Activated naive CD4-positive, alpha-beta T cell treated with anti-CD3 and anti-CD28 coated beads for 36 hours (primary cell): ENCODE measurements at regions of chr16 and their contacts with region 1.

Region 1: DNA sequence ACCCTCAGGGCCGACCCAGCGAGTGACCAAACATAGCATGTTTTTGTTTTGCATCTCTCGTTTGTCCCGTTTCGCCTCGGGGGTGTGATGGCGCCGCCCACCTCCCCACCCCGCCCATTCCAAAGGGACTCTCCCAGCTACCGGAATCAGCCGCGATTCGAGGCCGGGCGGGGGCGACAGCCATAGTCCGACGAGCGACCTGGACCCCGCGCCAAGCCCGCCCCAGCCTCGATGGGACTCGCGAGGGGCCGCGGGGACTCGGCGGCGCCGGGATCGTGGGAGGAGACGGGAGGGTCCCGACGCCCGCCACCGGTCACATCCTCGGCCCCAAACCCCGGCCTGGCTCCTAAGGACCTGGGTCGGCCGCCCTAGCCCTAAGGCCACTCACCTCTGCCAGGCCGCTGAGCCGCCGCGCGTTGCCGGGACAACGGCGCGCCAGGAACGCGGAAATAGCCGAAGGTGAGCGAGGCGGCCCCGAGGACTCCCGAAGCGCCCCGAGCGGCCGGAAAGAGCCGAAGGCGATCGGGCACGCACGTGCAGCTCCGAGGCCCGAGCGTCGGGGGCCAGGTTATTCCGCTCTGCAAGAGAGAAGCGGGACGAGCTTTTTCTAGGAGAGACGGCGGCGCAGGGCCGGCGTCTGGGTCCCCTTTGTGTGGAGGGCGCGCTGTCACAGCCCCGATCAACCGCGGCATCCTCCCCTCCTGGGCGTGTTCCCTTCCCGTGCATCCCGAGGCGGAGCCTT is 1.4 kb downstream of the IFT140 start:
- DNase-seq: peak; percentile 90
- H3K4me3 Mint-ChIP-seq: peak overlapping the region; percentile 96
- H3K27ac Mint-ChIP-seq: no peak overlapping the region
- H3K4me1 Mint-ChIP-seq: peaks cover 28% of the 10 kb centered on the region
- H3K27me3 Mint-ChIP-seq: no peaks in the 10 kb centered on the region

Region 2: DNA sequence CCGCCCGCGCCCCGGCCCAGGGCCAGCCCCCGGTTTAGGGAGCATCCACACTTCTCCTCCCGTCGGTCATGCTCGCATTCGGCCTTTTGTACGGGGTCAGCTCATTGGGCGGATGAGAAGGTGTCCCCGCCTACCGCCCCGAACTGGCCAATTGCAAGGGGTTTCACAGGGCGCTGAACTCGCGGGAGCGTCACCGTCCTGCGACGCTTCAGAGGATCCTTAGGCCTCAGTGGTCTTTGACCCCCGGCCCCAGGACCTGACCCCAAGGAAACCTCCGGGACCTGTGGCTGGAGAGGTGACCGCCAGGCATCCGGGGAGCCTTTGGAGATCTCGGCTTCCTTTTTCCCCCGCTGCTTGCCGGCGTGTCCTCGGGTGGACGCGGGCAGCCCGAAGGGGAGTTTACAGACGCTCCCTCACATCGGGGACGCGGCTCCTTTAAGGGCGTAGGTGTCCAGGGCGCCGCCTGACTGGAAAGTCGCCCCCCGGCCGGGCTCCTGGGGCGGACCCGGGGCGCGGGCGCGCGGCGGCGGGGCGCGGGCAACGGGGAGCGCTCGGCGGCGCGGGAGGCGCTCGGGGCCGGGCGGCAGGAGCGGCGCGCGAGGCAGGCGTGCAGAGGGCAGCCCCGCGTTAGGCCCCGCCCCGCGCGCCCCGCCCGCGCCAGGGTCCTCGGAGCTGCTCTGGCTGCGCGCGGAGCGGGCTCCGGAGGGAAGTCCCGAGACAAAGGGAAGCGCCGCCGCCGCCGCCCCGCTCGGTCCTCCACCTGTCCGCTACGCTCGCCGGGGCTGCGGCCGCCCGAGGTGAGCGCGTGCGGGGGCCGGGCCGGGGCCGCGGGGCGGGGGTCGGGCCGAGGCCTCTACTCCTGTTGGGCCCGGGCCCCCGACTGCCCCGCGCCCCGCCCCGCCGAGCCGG is 301.2 kb before region 1 on chr16 and contains the start of gene UBE2I:
- CTCF ChIA-PET with region 1: no interaction called
- intact Hi-C with region 1: loop called (anchors 1 kb)
- DNase-seq: peak; percentile 98
- H3K4me3 Mint-ChIP-seq: peak within 1 kb of the TSS; percentile 94
- H3K27ac Mint-ChIP-seq: peak within 1 kb of the TSS; percentile 99
- H3K4me1 Mint-ChIP-seq: peaks cover 41% of the 10 kb centered on the region
- H3K27me3 Mint-ChIP-seq: no peaks in the 10 kb centered on the region
- total RNA-seq, gene UBE2I: 273 to 297 TPM

Region 3: DNA sequence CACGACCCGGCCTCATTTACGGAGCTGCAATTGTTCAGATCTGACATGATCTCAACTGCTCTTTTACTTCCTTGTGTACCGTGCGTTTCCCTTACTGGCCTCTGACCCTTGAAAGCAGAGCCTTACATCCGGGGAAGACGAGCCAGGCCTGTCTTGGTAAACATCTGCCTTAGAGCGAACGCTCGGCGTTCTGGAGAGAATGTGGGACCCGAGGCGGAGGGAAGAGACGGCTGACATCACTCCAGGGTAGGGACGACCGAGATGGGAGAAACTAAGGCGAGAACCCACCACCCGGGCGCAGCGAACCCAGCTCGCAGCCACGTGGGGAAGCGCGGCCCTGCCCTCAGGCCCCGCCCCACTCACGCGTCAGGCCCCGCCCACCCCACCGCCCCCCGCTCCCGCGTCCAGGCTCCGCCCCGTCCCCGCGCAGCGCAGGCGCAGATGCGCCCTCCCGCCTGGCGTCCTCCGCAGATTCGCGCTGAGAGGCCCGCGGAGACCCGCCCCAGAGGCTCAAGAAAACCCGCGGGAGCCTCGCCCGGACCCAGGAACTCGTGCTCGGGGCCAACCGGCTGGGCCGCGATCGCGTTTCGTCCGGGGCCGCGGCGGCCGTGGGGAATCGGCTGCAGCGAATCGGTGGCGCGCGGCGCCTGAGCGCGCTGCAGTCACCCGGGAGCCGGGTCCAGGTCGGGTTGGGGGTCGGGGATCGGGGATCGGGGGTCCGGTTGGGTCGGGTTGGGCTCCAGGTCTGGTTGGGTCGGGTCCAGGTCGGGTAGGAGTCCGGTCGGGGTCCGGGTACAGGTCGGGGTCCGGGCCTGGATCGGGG is 117.3 kb before region 1 on chr16 and contains the start of gene TELO2:
- CTCF ChIA-PET with region 1: no interaction called
- intact Hi-C with region 1: loop called (anchors 10 kb)
- DNase-seq: peak; percentile 85
- H3K4me3 Mint-ChIP-seq: peak within 1 kb of the TSS; percentile 90
- H3K27ac Mint-ChIP-seq: peak within 1 kb of the TSS; percentile 94
- H3K4me1 Mint-ChIP-seq: peaks cover 16% of the 10 kb centered on the region
- H3K27me3 Mint-ChIP-seq: no peaks in the 10 kb centered on the region
- total RNA-seq, gene TELO2: 68.1 to 76.1 TPM

Region 4: DNA sequence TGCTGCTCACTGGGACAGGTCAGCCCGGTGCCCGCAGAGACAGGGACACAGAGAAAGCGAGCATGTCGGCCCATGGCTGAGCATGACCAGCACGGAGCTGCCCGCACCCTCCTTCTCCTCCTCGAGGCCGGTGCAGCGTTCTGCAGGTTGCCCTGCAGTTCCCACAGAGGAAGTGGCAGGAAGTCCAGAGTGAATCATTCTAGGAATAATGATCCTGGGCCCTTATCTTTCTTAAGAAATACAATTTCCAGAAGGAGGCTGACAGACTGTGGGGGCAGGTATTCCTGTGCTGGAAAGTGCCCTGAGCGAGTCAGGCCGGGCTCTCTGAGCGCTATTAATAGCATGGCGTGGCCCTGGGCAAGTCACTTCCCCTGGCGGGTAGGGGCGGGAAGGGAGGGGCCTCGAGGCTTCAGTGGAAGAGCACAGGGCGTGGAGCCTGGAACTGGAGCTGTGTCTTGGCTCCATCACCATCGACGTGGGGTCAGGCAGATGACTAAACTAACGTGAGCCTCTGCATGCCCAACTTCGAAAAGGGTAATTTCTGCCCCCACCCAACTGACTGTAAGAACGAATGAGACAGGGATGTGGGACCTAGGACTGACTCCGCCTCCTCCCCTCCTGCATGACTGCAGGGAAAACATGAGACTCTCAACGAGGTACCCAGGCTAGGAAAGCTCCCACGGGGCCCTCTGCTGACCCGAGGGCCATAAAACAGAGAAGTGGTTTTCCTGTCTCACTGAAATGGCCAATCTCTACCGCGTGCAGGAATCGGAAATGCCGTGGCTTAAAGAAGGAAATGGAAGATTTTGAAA is 67.2 kb before region 1 on chr16:
- CTCF ChIA-PET with region 1: no interaction called
- intact Hi-C with region 1: loop called (anchors 2 kb)
- DNase-seq: peak; percentile 84
- H3K4me3 Mint-ChIP-seq: peak overlapping the region; percentile 60
- H3K27ac Mint-ChIP-seq: peak overlapping the region; percentile 89
- H3K4me1 Mint-ChIP-seq: peaks cover 79% of the 10 kb centered on the region
- H3K27me3 Mint-ChIP-seq: no peaks in the 10 kb centered on the region

Region 5: DNA sequence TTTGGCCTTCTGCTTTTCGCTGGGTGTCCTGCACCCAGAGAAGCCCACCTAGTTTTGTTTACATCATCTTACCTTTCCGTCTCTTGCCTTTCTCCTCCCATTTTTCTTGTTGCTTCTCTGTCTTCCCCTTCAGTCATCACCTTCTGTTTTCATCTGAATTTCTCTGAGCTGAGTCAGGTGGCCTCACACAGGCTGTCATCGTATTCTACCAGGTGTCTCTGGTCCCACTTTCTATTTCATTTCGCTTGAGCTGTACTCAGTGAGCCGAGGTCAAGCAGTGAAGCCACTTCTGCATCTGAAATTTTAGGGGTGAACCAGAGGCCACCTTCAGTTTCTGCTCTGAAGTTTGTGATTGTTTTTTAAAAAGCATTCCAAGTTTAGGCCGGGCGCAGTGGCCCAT is 11.4 kb after region 1 on chr16:
- CTCF ChIA-PET with region 1: no interaction called
- intact Hi-C with region 1: no loop called
- DNase-seq: no peak
- H3K4me3 Mint-ChIP-seq: no peak overlapping the region
- H3K27ac Mint-ChIP-seq: no peak overlapping the region
- H3K4me1 Mint-ChIP-seq: peaks cover 29% of the 10 kb centered on the region
- H3K27me3 Mint-ChIP-seq: no peaks in the 10 kb centered on the region

Region 6: DNA sequence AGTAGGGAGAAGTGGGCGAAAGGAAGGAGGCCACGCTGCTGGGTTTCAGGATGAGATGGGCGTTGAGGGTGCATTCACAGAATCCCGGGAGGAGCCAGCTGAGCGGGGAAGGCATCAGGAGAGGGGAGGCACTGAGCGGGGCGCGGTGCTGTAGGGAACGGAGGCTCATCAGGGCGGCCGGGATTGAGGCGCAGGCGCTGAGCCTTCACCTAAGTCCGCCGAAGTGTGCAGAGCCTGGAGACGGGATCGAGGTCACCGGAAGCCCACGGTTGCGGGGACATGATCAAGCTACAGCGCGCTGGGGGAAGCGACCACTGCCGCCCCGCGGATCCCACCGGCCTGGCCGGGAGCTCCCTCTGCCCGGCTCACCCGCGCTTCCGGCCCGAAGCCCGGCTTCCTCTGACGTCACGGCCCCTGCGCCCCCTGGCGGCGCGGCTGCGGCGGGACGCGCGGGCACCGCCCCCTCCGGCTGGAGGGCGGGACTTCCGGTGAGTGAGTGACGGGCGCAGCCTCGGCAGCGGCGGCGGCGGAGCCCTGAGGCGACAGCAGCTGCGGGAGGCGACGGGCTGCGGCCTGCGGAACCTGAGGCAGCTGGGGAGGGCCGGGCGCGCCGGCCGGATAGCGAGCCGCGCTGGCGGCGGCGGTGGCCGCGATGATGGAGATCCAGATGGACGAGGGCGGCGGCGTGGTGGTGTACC is 95.4 kb after region 1 on chr16 and contains the start of gene MAPK8IP3:
- CTCF ChIA-PET with region 1: no interaction called
- intact Hi-C with region 1: loop called (anchors 1 kb)
- DNase-seq: peak; percentile 91
- H3K4me3 Mint-ChIP-seq: peak within 1 kb of the TSS; percentile 98
- H3K27ac Mint-ChIP-seq: peak within 1 kb of the TSS; percentile 92
- H3K4me1 Mint-ChIP-seq: peaks cover 32% of the 10 kb centered on the region
- H3K27me3 Mint-ChIP-seq: no peaks in the 10 kb centered on the region
- total RNA-seq, gene MAPK8IP3: 46.5 to 50.7 TPM

Region 7: DNA sequence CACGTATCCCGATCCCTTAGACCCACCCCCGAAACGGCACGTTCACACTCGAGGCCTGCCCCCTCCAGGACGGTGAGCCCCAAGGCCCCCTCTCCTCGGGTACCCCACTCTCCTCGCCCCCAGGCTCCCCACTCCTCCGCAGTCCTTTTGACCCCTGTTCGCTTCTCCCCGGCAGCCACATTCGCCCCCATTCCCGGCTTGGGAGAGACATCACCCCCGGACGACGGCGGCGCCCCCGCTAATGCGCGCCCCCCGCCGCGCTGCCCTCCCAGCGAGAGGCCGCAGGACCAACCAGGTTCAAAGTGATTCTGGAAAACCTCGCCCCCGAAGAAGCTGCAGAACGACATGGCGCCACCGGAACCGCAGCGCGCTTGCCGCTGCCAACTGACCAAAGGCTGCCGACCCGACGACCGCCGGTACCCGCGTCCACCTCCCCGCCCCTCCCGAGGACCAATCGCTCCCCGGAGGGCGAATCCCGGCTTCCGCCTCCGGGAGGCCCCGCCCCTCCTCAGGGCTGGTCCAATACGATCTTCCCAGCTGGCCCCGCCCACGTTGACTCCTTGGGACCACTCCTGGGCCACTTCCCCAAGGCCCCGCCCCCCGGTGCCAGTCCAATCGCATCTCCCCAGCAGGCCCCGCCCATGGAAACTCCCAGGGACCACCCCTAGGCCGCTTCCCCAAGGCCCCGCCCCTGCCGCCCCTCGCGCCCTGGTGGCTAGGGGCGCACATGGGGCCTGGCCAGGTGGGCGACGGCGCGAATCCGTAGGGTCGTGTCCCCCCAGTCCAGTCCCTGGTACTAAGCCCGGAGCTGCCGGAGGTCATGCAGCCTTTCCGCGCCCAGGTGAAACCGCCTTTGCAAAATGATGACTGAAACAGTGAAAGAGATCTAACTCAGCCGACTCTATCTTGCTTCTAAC is 332.6 kb after region 1 on chr16 and contains the start of gene MSRB1:
- CTCF ChIA-PET with region 1: no interaction called
- intact Hi-C with region 1: loop called (anchors 5 kb)
- DNase-seq: peak; percentile 100
- H3K4me3 Mint-ChIP-seq: peak within 1 kb of the TSS; percentile 82
- H3K27ac Mint-ChIP-seq: peak within 1 kb of the TSS; percentile 75
- H3K4me1 Mint-ChIP-seq: peaks cover 26% of the 10 kb centered on the region
- H3K27me3 Mint-ChIP-seq: no peaks in the 10 kb centered on the region
- total RNA-seq, gene MSRB1: 8.5 to 11.0 TPM